ENCODE measurements at regions of chr5 and their contacts with region 1.

Region 1: GRCh38 chr5:55711968-55712859 is at the start of gene SLC38A9:
- ATAC-seq: peak; percentile 99 to 100 (median 100)
- H3K4me3 ChIP-seq: peak within 1 kb of the TSS; percentile 56 to 99 (median 71)
- H3K27ac ChIP-seq: no peak within 1 kb of the TSS
- H3K4me1 ChIP-seq: peaks cover 5 to 6% of the 10 kb centered on the region in 2 donors
- total RNA-seq, gene SLC38A9: 16.5 to 28.6 (median 21.0) TPM

Region 2: DNA sequence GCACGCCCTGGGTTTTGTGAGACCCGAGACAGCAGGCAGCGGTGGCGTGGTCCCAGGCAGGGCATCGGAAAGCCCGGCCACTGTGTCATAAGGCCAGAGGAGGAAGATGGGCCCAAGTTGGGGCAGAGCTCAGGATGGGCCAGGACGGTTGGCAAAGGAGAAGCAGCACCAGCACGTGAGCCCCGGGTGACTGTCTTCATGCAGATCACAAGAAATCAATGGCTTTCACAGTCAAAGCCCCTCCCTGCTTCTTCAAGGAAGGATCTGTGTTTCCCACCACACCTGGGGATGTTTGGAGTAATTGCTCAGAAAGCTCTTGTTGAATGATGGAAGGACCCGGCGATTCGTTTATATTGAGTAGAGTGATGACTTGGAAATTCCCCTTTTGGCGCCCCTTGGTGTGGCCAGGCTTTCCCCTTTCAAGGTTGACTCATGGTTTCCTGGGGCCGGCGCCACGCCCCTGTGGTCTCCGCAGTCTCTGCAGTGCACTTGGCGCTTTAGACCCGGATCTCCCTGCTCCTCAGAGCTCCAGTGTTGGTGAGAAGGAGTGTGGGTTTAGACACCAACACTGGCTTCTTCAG is 191.0 kb after region 1 on chr5:
- in situ Hi-C with region 1: loop called in 1 of 9 experiments (anchors 25 kb)
- ATAC-seq: peak in 2 of 8 experiments; percentile 42 to 53
- H3K4me3 ChIP-seq: no peak overlapping the region
- H3K27ac ChIP-seq: no peak overlapping the region
- H3K4me1 ChIP-seq: no peaks in the 10 kb centered on the region